Naive thymus-derived CD4-positive, alpha-beta T cell (primary cell): ENCODE measurements at regions of chr5 and their contacts with region 1.

Region 1: GRCh38 chr5:33936004-33936380 is 194 bp upstream of the RXFP3 start:
- DNase-seq: peak; percentile 10 to 59 (median 20)
- ATAC-seq: peak; percentile 54
- H3K4me3 ChIP-seq: no peak overlapping the region
- H3K4me3 Mint-ChIP-seq: peak overlapping the region in 5 of 10 donors; percentile 38 to 53 (median 46)
- H3K27ac ChIP-seq: no peak overlapping the region
- H3K27ac Mint-ChIP-seq: peak overlapping the region in 1 of 9 donors; percentile 50
- H3K4me1 ChIP-seq: no peaks in the 10 kb centered on the region
- H3K4me1 Mint-ChIP-seq: peaks cover 0 to 4% (median 0%) of the 10 kb centered on the region in 7 donors
- H3K27me3 ChIP-seq: peaks cover 0 to 10% of the 10 kb centered on the region in 2 donors
- H3K27me3 Mint-ChIP-seq: peaks cover 64 to 81% (median 65%) of the 10 kb centered on the region in 5 donors

Region 2: DNA sequence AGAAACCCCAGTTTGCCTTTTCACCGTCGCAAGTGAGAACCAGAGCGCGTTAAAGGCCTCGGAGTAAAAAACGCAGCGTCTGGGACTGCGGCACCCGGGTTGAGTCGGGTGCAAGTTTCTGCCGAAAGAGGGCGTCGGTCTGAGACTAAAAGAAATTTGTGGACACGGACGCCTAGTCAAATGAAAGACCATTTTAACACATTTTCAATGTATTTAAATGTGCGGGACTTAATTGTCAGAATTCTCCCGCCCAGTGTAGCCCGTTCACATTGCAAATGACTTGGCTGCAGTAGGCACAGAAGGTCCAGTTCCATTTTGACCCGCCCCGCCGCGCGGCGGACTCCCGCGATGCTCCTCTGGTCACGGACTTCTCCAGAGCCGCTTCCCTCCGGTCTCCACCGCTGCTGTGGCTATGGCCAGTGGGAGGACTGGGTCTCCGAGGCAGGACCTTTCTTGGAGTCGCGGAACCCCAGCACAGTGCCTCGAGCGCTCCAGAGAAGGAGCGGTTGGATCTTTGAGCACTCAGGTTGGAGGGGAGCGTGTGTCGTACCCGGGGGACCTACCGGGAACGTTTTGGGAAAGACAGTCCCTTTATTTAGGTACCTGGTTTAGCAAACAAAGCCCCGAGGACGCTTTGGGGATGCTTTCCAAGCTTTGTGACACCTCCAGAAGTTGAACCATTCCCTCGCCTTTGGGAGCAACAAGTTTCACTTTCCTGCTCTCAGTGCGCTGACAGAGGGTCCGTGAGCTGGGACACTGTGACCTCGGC is 1226.0 kb before region 1 on chr5:
- CTCF ChIA-PET with region 1: no interaction called
- POLR2A ChIA-PET with region 1: no interaction called
- intact Hi-C with region 1: loop called in 1 of 2 experiments (anchors 10 kb)
- DNase-seq: peak in 4 of 9 donors; percentile 15 to 57 (median 18)
- ATAC-seq: peak; percentile 55
- H3K4me3 ChIP-seq: peak overlapping the region; percentile 46
- H3K4me3 Mint-ChIP-seq: peak overlapping the region; percentile 43 to 84 (median 74)
- H3K27ac ChIP-seq: no peak overlapping the region
- H3K27ac Mint-ChIP-seq: peak overlapping the region in 1 of 9 donors; percentile 33
- H3K4me1 ChIP-seq: peaks cover 3 to 7% of the 10 kb centered on the region in 2 donors
- H3K4me1 Mint-ChIP-seq: peaks cover 18 to 35% (median 28%) of the 10 kb centered on the region in 7 donors
- H3K27me3 ChIP-seq: peaks cover 0 to 7% of the 10 kb centered on the region in 2 donors
- H3K27me3 Mint-ChIP-seq: peaks cover 62 to 74% (median 67%) of the 10 kb centered on the region in 5 donors

Region 3: DNA sequence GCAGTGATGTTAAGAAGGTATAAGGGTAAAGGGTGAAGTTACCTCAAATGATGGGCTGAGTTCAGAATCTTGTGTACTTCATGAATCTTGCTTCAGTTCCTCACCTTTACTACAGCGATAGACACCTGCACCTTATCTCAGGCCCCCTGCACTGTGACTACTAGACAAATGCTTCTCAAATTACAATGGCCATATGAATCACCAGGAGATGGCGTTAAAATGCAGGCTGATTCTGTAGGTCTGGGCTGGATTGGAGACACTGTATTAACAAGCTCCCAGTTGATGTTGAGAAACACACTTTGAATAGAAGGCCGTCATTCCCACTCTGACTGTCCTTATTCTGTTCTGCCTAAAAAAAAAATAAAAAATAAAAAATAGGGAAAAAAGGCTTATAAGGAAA is 465.4 kb before region 1 on chr5:
- CTCF ChIA-PET with region 1: interaction called, 3 read pairs
- POLR2A ChIA-PET with region 1: no interaction called
- intact Hi-C with region 1: loop called in 1 of 2 experiments (anchors 1 kb)
- DNase-seq: peak in 2 of 9 donors; percentile 2
- ATAC-seq: no peak
- H3K4me3 ChIP-seq: no peak overlapping the region
- H3K4me3 Mint-ChIP-seq: no peak overlapping the region
- H3K27ac ChIP-seq: no peak overlapping the region
- H3K27ac Mint-ChIP-seq: no peak overlapping the region
- H3K4me1 ChIP-seq: no peaks in the 10 kb centered on the region
- H3K4me1 Mint-ChIP-seq: peaks cover 0 to 1% (median 0%) of the 10 kb centered on the region in 7 donors
- H3K27me3 ChIP-seq: no peaks in the 10 kb centered on the region
- H3K27me3 Mint-ChIP-seq: no peaks in the 10 kb centered on the region

Region 4: DNA sequence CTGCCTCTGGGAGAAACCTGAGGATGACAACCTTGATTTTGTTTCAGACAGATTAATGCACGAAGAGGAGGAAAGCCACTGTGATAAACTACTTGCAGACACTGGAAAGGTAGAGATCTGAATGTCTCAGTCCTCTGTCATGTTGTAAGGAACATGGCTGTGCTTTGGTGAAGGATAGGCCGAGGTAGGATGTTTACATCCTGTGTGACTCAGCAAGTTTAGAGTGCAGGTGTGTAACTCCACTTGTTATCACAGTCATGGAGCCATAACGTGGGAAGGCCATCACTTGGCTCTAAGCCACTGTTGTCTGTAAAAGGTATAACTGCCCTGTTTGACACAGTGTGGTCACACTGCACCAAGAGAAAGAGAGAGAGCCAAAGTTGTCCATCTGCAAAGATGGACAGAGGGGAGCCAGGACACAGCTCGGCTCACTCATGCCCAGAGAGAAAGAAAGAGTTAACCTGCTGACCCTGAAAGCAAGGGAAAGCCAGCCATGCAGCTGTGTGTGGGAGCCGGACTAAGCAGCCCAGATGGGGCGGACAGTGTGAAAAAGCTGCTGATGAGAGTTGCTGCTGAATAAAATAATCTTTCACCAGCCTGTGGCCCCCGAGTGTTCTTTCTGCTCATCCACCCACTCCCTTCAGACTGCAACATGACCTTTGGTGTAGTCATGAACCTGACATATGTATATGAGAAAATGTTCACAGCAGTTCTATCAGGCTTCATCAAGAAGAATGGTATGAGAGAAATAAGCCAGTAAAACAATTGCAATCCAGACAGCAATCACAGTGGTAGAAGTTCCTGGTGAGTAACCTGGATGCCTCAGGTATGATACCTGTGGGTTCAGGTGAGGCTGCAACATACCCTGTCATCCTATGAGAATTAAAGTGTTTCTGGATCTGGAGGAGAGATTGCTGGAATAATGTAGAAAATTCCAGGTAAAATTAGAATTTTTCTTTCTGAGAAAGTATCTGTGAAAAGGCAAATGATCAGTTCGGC is 379.4 kb before region 1 on chr5:
- CTCF ChIA-PET with region 1: no interaction called
- POLR2A ChIA-PET with region 1: no interaction called
- intact Hi-C with region 1: no loop called
- DNase-seq: no peak
- ATAC-seq: no peak
- H3K4me3 ChIP-seq: no peak overlapping the region
- H3K4me3 Mint-ChIP-seq: no peak overlapping the region
- H3K27ac ChIP-seq: no peak overlapping the region
- H3K27ac Mint-ChIP-seq: no peak overlapping the region
- H3K4me1 ChIP-seq: no peaks in the 10 kb centered on the region
- H3K4me1 Mint-ChIP-seq: peaks cover 0 to 5% (median 0%) of the 10 kb centered on the region in 7 donors
- H3K27me3 ChIP-seq: peaks cover 0 to 2% of the 10 kb centered on the region in 2 donors
- H3K27me3 Mint-ChIP-seq: peaks cover 0 to 11% (median 5%) of the 10 kb centered on the region in 5 donors

Region 5: GRCh38 chr5:33588654-33589372 is 347.2 kb before region 1 on chr5:
- CTCF ChIA-PET with region 1: interaction called, 17 read pairs
- POLR2A ChIA-PET with region 1: no interaction called
- intact Hi-C with region 1: loop called (anchors 1 kb)
- DNase-seq: peak in 8 of 9 donors; percentile 0 to 40 (median 10)
- ATAC-seq: no peak
- H3K4me3 ChIP-seq: no peak overlapping the region
- H3K4me3 Mint-ChIP-seq: no peak overlapping the region
- H3K27ac ChIP-seq: no peak overlapping the region
- H3K27ac Mint-ChIP-seq: no peak overlapping the region
- H3K4me1 ChIP-seq: no peaks in the 10 kb centered on the region
- H3K4me1 Mint-ChIP-seq: peaks cover 0 to 1% (median 0%) of the 10 kb centered on the region in 7 donors
- H3K27me3 ChIP-seq: no peaks in the 10 kb centered on the region
- H3K27me3 Mint-ChIP-seq: peaks cover 0 to 5% (median 4%) of the 10 kb centered on the region in 5 donors

Region 6: GRCh38 chr5:33736510-33736909 is 199.5 kb before region 1 on chr5:
- CTCF ChIA-PET with region 1: no interaction called
- POLR2A ChIA-PET with region 1: no interaction called
- intact Hi-C with region 1: loop called in 1 of 2 experiments (anchors 10 kb)
- DNase-seq: no peak
- ATAC-seq: no peak
- H3K4me3 ChIP-seq: no peak overlapping the region
- H3K4me3 Mint-ChIP-seq: no peak overlapping the region
- H3K27ac ChIP-seq: no peak overlapping the region
- H3K27ac Mint-ChIP-seq: no peak overlapping the region
- H3K4me1 ChIP-seq: no peaks in the 10 kb centered on the region
- H3K4me1 Mint-ChIP-seq: no peaks in the 10 kb centered on the region
- H3K27me3 ChIP-seq: peaks cover 0 to 4% of the 10 kb centered on the region in 2 donors
- H3K27me3 Mint-ChIP-seq: peaks cover 0 to 8% (median 0%) of the 10 kb centered on the region in 5 donors

Region 7: DNA sequence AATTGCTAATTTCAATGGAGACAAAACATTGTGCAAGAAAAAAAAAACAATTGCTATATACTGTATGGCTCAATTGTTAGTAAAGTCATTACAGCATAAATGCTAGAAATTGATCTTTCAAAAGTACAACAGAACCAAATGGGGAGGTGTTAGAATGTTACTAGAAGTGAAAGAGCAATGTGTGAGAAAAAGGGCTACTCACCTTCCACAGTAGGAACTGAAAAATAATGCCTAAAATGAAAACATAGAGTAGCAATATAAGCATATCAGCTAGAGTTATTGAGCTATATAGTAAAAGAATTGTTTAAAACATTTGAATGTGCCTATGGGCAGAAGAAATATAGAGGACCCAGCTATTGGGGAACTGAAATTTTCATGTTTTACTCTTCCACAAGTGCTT is 10.7 kb before region 1 on chr5:
- CTCF ChIA-PET with region 1: no interaction called
- POLR2A ChIA-PET with region 1: no interaction called
- intact Hi-C with region 1: no loop called
- DNase-seq: no peak
- ATAC-seq: no peak
- H3K4me3 ChIP-seq: no peak overlapping the region
- H3K4me3 Mint-ChIP-seq: no peak overlapping the region
- H3K27ac ChIP-seq: no peak overlapping the region
- H3K27ac Mint-ChIP-seq: no peak overlapping the region
- H3K4me1 ChIP-seq: no peaks in the 10 kb centered on the region
- H3K4me1 Mint-ChIP-seq: no peaks in the 10 kb centered on the region
- H3K27me3 ChIP-seq: no peaks in the 10 kb centered on the region
- H3K27me3 Mint-ChIP-seq: peaks cover 4 to 28% (median 17%) of the 10 kb centered on the region in 5 donors

Region 8: DNA sequence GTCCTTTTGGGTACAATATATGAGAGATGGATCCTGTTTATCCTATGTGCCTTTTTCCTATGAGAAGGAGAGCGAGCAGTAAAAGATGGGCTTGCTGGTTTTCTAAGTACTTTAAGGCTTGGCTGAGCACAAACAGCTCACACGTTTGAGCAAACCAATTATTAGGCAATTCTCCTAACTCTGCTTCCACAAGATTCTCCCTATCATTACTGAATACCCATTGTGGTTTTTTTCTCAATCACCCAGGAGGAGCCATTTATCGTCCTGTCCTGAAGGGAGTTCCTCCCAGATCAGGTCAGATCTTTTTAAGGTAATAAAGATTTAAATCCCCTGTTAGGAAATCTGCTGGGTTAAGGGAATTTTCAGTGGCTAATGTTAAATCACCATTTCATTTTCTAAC is 126.4 kb after region 1 on chr5:
- CTCF ChIA-PET with region 1: no interaction called
- POLR2A ChIA-PET with region 1: no interaction called
- intact Hi-C with region 1: no loop called
- DNase-seq: no peak
- ATAC-seq: no peak
- H3K4me3 ChIP-seq: no peak overlapping the region
- H3K4me3 Mint-ChIP-seq: no peak overlapping the region
- H3K27ac ChIP-seq: no peak overlapping the region
- H3K27ac Mint-ChIP-seq: no peak overlapping the region
- H3K4me1 ChIP-seq: no peaks in the 10 kb centered on the region
- H3K4me1 Mint-ChIP-seq: peaks cover 0 to 6% (median 0%) of the 10 kb centered on the region in 7 donors
- H3K27me3 ChIP-seq: no peaks in the 10 kb centered on the region
- H3K27me3 Mint-ChIP-seq: no peaks in the 10 kb centered on the region

Region 9: DNA sequence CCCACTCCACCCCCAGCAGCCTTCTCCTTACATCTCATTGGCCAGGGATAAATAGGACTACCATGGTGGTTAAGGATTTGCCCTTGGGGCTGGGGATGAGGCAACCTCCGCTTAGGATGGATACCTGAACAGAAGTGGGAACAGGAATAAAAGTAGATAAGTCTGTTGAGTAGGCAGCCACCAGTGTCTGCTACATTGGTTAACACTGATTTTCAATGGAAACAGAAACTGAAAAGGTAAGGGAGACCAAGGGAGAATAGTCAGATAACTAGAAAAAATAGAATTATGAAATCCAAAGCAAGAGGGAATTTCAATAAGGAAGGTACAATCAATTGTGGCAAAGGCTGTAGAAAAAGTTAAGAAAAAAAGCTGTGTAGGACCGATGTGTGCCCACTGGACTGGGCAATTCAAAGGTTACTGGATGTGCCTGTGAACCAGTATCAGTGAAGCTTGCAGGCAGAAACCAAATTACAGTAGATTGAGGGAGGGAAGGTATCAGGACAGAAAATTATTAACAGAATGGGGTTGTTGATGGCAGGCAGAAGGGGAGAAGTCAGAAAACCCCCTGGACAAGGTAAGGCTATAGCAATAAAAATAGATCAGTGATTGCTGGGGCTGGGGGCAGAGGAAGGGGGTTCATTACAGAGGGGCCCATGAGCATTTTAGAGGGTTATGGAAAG is 1042.1 kb after region 1 on chr5:
- CTCF ChIA-PET with region 1: no interaction called
- POLR2A ChIA-PET with region 1: no interaction called
- intact Hi-C with region 1: no loop called
- DNase-seq: no peak
- ATAC-seq: no peak
- H3K4me3 ChIP-seq: no peak overlapping the region
- H3K4me3 Mint-ChIP-seq: no peak overlapping the region
- H3K27ac ChIP-seq: no peak overlapping the region
- H3K27ac Mint-ChIP-seq: no peak overlapping the region
- H3K4me1 ChIP-seq: no peaks in the 10 kb centered on the region
- H3K4me1 Mint-ChIP-seq: no peaks in the 10 kb centered on the region
- H3K27me3 ChIP-seq: no peaks in the 10 kb centered on the region
- H3K27me3 Mint-ChIP-seq: peaks cover 0 to 16% (median 6%) of the 10 kb centered on the region in 5 donors